BJ (cell line): ENCODE measurements at regions of chr18 and their contacts with region 1.

Region 1: DNA sequence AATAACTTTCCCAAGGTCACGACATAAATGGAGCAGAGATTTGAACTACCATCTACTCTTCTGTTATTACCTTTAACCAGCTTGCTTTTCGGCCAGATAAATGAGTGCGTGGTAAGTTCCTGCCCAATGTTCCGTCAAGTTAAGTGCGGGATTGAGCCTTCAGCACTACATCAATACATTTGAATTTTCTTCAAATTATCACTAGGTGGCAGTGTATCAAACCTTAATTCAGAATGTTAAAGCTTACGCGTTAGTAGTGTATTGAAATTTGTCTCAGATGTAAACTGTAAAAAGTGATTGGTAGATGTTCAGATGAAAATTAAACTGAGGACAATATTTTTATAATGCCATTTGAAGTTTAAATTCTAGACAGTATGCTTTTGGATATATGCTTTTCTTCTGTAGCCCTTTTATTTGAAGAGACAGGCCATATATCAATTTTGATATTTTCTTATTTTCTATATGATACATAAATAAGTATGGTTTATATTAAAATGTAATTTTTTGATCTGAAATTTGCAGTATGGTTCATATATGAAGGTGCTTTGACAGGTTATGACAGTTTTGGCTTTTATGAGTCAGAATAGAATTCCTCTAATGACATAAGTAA is 681.3 kb downstream of the ADCYAP1 start:
- DNase-seq: peak; percentile 0
- H3K4me3 ChIP-seq: no peak overlapping the region
- H3K27me3 ChIP-seq: no peaks in the 10 kb centered on the region
- CTCF ChIP-seq: peak; percentile 42

Region 2: GRCh38 chr18:2547477-2548087 is 961.6 kb after region 1 on chr18:
- CTCF ChIA-PET with region 1: interaction called, 17 read pairs
- POLR2A ChIA-PET with region 1: no interaction called
- DNase-seq: no peak
- H3K4me3 ChIP-seq: no peak overlapping the region
- H3K27me3 ChIP-seq: no peaks in the 10 kb centered on the region
- CTCF ChIP-seq: peak; percentile 38